ENCODE measurements at regions of chr2 and their contacts with region 1.

Region 1: DNA sequence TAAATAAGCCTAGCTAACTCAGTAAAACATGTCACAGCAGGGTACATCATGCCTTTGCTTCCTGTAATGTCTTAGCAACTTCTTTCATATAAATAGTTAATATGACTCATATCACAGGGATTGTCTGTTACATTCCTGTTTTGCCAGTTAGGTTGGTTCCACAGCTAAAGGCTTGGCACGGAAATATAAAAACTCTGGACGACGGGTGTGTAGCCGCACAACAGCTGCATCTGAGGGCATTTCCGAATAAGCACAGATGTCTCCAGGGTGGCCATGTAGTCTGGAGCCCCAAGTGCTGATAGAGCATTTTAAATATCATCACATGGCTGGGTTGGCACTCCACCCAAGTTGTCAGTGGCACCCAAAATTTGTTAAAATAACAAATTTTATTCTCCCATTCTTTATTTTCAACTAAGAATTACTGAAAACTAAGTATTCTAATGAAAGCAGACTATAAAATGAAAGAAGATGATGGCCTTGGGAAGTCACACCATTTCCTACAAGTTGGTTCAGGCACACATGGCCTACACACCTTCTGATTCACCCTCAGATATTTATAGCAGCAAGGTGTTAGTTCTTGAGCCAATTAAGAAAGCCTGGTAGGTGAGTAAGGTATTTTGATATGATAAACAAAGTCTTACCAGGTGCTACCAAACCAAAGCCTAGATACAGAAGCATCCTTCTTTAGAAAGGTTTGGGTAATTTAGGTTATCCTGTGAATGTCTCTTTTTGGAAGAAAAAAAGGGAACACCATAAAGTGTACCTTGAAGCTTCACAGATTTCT is 61.8 kb upstream of the STK17B start:
- DNase-seq: no peak
- CTCF ChIP-seq: no peak

Region 2: DNA sequence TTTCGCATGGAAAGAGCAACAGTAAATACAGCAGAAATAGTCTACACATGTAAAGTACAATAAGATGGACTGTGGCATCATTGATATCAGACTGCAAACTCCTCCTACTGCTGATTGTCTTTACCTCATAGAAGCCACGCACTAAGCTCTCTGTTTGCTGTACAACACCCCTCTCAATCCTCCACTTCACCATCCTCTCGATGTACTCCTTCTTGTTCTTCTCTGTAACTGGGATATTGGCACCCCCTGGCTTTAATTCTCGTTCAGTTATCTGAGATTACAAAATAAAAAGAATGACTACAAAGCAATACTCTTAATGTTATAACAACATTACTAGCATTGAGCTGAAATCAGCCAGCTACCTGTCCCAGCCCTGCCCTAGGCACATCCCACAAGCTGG is 12.5 kb before region 1 on chr2:
- CTCF ChIA-PET with region 1: interaction called, 48 read pairs
- POLR2A ChIA-PET with region 1: no interaction called
- DNase-seq: no peak
- CTCF ChIP-seq: no peak

Region 3: GRCh38 chr2:196291873-196292800 is 58.9 kb after region 1 on chr2:
- CTCF ChIA-PET with region 1: no interaction called
- POLR2A ChIA-PET with region 1: no interaction called
- DNase-seq: no peak
- CTCF ChIP-seq: no peak

Measured in GM10248 (cell line).